ENCODE measurements at regions of chr5 and their contacts with region 1.

Region 1: GRCh38 chr5:170333161-170333910 is 35.8 kb upstream of the LCP2 start:
- DNase-seq: peak; percentile 80
- H3K4me3 Mint-ChIP-seq: peak overlapping the region; percentile 42
- H3K27ac Mint-ChIP-seq: no peak overlapping the region
- H3K4me1 Mint-ChIP-seq: peaks cover 65% of the 10 kb centered on the region
- H3K27me3 Mint-ChIP-seq: no peaks in the 10 kb centered on the region

Region 2: DNA sequence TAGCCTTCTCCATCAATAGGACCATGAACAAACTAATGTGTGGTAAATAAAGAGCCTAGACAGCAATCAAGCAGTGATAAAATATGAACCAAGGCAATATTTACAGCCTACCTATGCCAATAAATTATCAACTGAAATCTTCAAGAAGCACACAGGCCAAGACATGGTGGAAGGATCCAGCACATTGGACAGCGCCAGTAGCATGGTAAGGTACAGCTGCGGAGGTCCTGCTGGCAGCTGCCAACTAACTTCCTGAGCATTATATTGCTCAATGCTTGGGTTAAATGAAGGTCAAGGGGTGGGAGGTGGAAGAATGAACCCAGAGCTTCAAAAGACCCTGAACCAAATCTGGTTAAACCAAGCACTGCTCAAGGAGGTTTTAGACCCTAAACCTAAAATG is 766.3 kb before region 1 on chr5:
- CTCF ChIA-PET with region 1: no interaction called
- intact Hi-C with region 1: no loop called
- DNase-seq: peak; percentile 9
- H3K4me3 Mint-ChIP-seq: no peak overlapping the region
- H3K27ac Mint-ChIP-seq: no peak overlapping the region
- H3K4me1 Mint-ChIP-seq: no peaks in the 10 kb centered on the region
- H3K27me3 Mint-ChIP-seq: peaks cover 31% of the 10 kb centered on the region

Region 3: DNA sequence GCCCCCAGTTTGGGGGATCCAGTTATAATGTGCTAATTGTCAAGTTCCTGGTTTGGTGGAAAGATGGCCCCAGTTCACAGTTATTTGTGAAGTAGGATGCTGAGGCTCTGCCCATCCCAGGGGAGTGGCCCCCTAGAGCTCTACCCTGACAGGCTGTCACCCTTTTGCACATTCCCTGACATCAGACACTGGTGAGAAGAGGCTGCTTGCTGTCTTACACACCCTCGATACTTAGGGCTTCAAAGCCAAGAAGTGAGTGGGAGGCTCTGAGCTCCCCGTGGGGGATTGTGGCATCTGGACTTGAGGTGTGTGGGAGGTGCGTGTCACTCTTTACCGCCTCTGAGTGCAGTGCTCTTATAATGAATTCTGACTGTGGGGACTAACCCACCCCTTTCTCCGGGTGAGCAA is 527.8 kb before region 1 on chr5:
- CTCF ChIA-PET with region 1: no interaction called
- intact Hi-C with region 1: loop called (anchors 1 kb)
- DNase-seq: peak; percentile 81
- H3K4me3 Mint-ChIP-seq: peak overlapping the region; percentile 1
- H3K27ac Mint-ChIP-seq: peak overlapping the region; percentile 92
- H3K4me1 Mint-ChIP-seq: peaks cover 38% of the 10 kb centered on the region
- H3K27me3 Mint-ChIP-seq: no peaks in the 10 kb centered on the region

Region 4: DNA sequence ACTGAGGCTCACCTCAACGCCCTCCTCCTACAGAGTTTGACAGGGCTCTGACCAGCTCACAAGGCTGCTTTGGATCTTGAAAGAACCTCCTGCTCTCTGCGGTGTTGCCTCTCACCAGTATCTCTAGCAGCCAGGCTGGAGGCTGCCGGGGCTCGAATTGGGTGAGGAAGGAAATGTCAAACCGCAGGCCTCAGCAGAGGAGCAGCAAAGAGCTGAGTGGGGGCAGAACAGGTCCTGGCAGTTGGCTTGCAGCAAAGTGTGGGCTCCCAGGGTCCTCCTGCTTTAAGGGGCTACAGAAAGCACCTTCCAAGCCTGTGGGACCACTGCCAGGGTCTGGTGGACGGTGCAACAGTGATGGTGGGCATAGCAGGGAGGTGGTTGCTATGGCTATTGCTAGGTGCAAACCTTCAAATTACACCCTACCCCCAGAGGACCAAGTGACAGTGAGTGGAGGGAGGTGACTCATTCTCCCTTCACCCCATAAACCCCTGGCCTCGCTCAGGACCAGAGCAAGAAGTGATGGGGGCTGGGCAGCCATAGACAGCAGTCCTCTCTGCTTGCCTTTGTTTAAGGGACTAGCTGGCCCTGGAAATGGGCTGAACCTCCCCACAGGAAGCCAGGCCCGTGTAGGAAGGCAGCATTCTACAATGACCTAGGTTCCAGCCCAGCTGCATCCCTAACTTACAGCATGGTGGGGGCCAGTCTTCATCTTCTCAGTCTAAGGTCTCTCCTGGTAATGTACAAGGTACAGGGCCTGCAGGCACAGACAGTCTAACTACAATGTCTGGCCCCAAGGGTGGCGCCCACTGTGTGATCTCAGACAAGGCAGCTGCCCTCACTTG is 54.5 kb before region 1 on chr5:
- CTCF ChIA-PET with region 1: interaction called, 136 read pairs
- intact Hi-C with region 1: loop called (anchors 1 kb)
- DNase-seq: peak; percentile 90
- H3K4me3 Mint-ChIP-seq: peak overlapping the region; percentile 45
- H3K27ac Mint-ChIP-seq: peak overlapping the region; percentile 83
- H3K4me1 Mint-ChIP-seq: peaks cover 95% of the 10 kb centered on the region
- H3K27me3 Mint-ChIP-seq: no peaks in the 10 kb centered on the region

Region 5: GRCh38 chr5:170302653-170303501 is 30.5 kb before region 1 on chr5:
- CTCF ChIA-PET with region 1: interaction called, 195 read pairs
- intact Hi-C with region 1: loop called (anchors 1 kb)
- DNase-seq: peak; percentile 69
- H3K4me3 Mint-ChIP-seq: peak overlapping the region; percentile 78
- H3K27ac Mint-ChIP-seq: peak overlapping the region; percentile 96
- H3K4me1 Mint-ChIP-seq: peaks cover 93% of the 10 kb centered on the region
- H3K27me3 Mint-ChIP-seq: no peaks in the 10 kb centered on the region

Region 6: GRCh38 chr5:170571875-170572852 is 238.8 kb after region 1 on chr5:
- CTCF ChIA-PET with region 1: no interaction called
- intact Hi-C with region 1: loop called (anchors 1 kb)
- DNase-seq: peak; percentile 94
- H3K4me3 Mint-ChIP-seq: no peak overlapping the region
- H3K27ac Mint-ChIP-seq: no peak overlapping the region
- H3K4me1 Mint-ChIP-seq: peaks cover 20% of the 10 kb centered on the region
- H3K27me3 Mint-ChIP-seq: peaks cover 63% of the 10 kb centered on the region

Region 7: DNA sequence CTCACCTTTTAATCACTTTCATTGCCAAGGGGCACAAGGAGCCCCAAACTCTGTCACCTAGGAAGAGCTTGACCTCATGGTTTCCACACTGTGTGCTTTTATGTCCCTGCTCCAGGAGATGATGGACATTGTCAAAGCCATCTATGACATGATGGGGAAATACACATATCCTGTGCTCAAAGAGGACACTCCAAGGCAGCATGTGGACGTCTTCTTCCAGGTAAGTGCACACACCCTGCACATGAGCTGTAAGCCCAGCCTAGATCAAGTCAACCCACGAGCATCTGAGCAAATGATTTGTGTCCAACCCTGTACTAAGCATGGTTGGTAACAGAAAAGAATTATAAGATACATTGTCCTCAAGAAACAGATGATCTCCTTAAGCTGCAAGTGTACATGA is 399.3 kb after region 1 on chr5:
- CTCF ChIA-PET with region 1: no interaction called
- intact Hi-C with region 1: no loop called
- DNase-seq: no peak
- H3K4me3 Mint-ChIP-seq: no peak overlapping the region
- H3K27ac Mint-ChIP-seq: no peak overlapping the region
- H3K4me1 Mint-ChIP-seq: no peaks in the 10 kb centered on the region
- H3K27me3 Mint-ChIP-seq: peaks cover 6% of the 10 kb centered on the region